ENCODE measurements at regions of chr22 and their contacts with region 1.

Region 1: DNA sequence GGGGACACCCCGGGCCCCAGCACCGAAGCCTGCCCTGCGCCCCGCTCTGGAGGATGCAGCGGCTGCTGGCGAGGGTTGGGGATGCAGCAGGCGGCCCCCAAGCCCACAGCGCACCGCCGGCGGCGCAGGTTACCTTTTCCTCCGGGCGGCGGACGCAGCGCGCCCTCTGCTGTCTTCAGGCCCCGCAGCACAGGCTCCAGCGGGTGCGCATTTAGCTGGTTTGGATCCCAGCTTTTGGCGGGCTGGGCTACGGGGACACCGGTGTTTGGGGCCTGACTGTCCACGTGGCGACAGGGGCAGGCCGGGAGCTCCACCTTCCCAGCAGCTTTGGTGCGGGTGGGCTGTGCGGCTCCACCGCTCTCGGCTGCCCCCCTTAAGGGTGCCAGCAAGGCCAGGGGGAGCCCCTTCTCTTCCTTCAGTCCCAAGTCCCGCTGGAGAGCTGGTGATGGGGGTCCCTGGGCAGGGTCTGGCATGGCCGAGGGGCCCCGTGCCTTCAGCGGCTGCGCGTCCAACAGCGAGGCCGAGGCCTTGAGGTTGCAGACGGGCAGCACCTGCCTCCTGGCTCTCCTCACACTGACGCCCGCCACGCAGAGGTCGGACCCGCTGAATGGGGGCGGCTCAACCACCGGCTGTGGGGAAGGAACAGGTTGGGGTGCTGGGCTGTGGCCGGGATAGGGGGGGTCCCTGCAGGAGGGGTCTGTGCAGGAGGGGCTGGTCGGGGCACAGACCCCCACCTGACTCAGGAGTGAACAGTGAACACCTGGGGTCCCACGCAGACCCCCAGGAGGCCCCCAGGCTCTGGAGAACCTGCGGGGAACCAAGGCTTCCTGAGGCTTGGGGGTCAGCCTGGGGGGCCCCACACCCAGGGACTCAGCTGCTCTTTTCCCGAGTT is 18.0 kb upstream of the IL17REL start:
- DNase-seq: peak; percentile 94
- H3K4me3 Mint-ChIP-seq: no peak overlapping the region
- H3K27ac Mint-ChIP-seq: no peak overlapping the region
- H3K4me1 Mint-ChIP-seq: peaks cover 25% of the 10 kb centered on the region
- H3K27me3 Mint-ChIP-seq: peaks cover 16% of the 10 kb centered on the region

Region 2: DNA sequence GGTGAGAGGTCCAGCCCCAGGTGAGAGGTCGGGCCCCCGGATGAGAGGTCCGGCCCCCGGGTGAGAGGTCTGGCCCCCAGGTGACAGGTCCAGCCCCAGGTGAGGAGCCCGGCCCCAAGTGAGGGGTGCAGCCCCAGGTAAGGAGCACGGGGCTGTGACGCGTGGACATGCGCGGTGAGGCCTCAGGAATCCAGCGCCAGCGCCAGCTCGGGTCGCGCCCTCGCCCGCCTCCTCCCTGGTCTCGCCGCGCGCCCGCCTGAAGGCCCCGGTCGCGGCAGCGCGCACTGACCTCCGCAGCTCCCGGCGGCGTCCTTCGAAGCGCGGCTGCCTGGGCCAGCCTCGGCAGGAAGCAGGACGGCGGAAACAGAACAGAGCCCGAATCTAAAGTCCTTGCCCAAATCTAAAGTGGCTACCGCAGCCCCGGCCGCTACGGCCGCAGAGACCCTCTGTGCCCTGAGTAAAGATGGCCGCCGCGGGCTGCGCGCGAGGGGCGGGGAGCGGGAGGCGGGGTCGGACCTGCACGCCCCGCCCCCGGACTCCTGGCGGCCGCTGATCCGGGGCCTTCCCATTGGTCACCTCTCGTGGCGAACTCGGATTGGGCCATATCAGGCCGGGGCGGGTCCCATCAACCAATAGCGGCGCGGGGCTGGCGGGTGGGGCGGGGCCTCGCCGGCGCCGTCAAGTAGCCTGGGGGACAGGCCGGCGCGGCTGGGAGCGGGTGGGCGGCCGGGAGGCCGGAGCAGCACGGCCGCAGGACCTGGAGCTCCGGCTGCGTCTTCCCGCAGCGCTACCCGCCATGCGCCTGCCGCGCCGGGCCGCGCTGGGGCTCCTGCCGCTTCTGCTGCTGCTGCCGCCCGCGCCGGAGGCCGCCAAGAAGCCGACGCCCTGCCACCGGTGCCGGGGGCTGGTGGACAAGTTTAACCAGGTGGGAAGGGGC is 112.3 kb before region 1 on chr22 and contains the starts of genes ALG12 and CRELD2:
- CTCF ChIA-PET with region 1: interaction called, 12 read pairs
- POLR2A ChIA-PET with region 1: interaction called, 4 read pairs
- intact Hi-C with region 1: no loop called
- DNase-seq: peak; percentile 98
- H3K4me3 Mint-ChIP-seq: peak within 1 kb of the TSS; percentile 79
- H3K27ac Mint-ChIP-seq: peak within 1 kb of the TSS; percentile 79
- H3K4me1 Mint-ChIP-seq: peaks cover 25% of the 10 kb centered on the region
- H3K27me3 Mint-ChIP-seq: no peaks in the 10 kb centered on the region
- total RNA-seq, gene ALG12: 12.4 to 13.8 TPM
- total RNA-seq, gene CRELD2: 29.8 to 30.7 TPM

Region 3: GRCh38 chr22:49930739-49931412 is 99.7 kb before region 1 on chr22:
- CTCF ChIA-PET with region 1: interaction called, 95 read pairs
- POLR2A ChIA-PET with region 1: interaction called, 4 read pairs
- intact Hi-C with region 1: loop called (anchors 1 kb)
- DNase-seq: peak; percentile 77
- H3K4me3 Mint-ChIP-seq: peak overlapping the region; percentile 6
- H3K27ac Mint-ChIP-seq: peak overlapping the region; percentile 66
- H3K4me1 Mint-ChIP-seq: peaks cover 40% of the 10 kb centered on the region
- H3K27me3 Mint-ChIP-seq: no peaks in the 10 kb centered on the region

Region 4: DNA sequence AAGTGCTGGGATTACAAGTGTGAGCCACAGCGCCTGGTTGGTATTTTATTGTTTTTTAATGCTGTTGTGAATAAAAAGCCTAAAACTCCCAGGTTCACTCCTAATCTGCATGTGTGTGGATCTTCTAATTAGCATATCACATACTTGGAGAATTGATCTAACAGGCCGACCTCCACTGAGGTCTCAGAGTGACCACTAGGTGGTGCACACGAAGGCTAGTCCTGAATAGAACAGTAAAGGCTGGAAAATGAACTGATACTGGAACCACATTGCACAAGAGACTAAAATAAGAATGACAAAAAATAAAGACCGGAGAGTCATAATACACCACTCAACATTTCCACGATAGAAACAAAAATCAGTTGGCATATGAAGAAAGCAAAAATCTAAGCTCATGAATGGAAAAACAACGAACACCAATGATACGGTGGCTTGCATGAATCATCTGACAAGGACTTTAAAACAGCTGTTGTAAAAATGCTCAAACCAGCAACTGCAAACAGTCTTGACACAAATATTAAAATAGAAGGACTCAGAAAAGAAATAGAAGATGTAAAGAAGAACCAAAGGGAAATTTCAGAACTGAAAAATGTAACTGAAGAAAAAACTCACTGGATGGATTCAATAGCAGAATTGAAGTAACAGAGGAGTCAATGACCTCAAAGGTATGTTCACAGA is 50.8 kb before region 1 on chr22:
- CTCF ChIA-PET with region 1: interaction called, 53 read pairs
- POLR2A ChIA-PET with region 1: interaction called, 3 read pairs
- intact Hi-C with region 1: loop called (anchors 2 kb)
- DNase-seq: peak; percentile 68
- H3K4me3 Mint-ChIP-seq: peak overlapping the region; percentile 42
- H3K27ac Mint-ChIP-seq: peak overlapping the region; percentile 83
- H3K4me1 Mint-ChIP-seq: peaks cover 44% of the 10 kb centered on the region
- H3K27me3 Mint-ChIP-seq: peaks cover 4% of the 10 kb centered on the region

Region 5: DNA sequence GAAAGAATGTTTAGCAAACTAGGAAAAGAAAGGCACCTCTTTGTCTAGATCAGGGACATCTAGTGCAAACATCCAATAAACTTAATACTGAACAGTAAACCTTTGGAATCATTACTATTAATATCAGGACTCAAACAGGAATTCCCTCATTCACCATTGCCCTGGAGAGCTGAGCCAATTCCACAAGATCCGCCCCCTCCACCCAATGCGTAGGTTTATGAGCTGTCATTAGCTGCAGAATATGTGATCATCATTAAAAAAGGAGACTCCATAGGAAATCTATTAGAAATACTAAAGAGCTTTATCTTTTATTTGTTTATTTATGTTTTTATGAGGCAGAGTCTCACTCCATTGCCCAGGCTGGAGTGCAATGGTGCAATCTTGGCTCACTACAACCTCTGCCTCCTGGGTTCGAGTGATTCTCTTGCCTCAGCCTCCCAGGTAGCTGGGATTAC is 23.5 kb before region 1 on chr22:
- CTCF ChIA-PET with region 1: interaction called, 19 read pairs
- POLR2A ChIA-PET with region 1: no interaction called
- intact Hi-C with region 1: no loop called
- DNase-seq: no peak
- H3K4me3 Mint-ChIP-seq: no peak overlapping the region
- H3K27ac Mint-ChIP-seq: no peak overlapping the region
- H3K4me1 Mint-ChIP-seq: peaks cover 27% of the 10 kb centered on the region
- H3K27me3 Mint-ChIP-seq: peaks cover 7% of the 10 kb centered on the region

Region 6: DNA sequence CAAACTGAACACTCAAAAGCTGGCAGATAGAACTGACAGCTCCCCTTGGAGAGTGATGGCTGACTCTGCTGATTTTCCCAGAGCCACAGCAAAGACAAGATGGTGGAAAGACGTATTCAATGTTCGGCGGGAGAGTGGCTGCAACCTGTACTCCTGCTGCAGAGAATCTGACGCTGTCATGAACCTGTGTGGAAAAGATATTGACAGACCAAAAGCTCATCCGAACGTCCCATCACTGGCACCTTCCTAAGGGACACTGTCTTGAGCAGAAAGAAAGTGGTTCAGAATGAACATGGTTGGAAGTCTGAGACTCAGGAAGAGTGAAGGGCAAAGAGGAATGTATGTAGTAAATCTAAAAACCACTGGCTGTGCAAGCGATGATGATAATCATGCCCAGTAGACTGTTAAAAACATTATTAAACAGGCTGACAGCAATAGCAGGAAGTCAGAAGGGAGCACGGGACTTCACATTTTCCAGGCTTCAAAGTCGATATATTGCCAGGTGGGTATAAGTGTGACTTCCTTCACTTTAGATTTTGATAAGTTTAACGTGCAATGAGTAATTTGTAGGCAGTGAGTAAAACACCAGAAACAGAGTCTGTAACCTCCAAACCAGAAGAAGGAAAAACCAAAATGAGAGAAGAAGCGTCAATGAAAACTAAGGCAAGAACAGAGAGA is 11.8 kb before region 1 on chr22:
- CTCF ChIA-PET with region 1: interaction called, 36 read pairs
- POLR2A ChIA-PET with region 1: interaction called, 11 read pairs
- intact Hi-C with region 1: loop called (anchors 1 kb)
- DNase-seq: peak; percentile 69
- H3K4me3 Mint-ChIP-seq: peak overlapping the region; percentile 74
- H3K27ac Mint-ChIP-seq: no peak overlapping the region
- H3K4me1 Mint-ChIP-seq: no peaks in the 10 kb centered on the region
- H3K27me3 Mint-ChIP-seq: no peaks in the 10 kb centered on the region

Measured in activated CD4-positive, alpha-beta memory T cell treated with anti-CD3 and anti-CD28 coated beads for 36 hours (primary cell).